A673 (cell line): ENCODE measurements at regions of chr10 and their contacts with region 1.

Region 1: DNA sequence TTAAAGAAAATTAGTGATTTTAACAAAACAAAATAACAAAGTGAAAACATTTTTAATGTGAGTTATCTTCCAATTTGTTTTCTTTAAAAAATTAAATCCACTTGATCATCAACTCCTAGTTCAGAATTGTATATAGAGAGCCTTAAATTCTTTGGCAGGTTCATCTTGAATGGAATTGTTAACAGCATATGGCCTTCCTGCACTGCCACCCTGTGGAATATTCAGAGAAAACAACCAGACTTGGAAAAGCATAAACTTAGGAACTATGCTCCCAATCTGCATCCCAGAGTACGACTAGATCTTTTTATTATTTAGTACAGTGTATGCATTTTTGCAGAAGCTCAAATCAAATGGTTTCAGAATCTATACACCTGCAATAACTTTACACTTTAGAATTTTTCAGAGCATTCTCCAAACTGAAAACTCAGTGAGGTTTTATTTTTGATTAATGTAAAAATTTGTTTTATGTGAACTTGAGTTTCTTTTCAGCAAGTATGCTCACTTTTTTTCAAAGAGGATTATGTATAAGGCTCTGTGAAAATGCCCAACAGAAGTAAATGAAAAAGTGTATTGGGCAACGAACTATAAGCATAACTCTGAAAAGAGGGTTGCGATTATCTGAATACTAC is 44.9 kb upstream of the ANK3 start:
- DNase-seq: peak; percentile 72
- H3K4me3 ChIP-seq: no peak overlapping the region
- H3K27ac ChIP-seq: no peak overlapping the region
- H3K4me1 ChIP-seq: no peaks in the 10 kb centered on the region
- H3K27me3 ChIP-seq: no peaks in the 10 kb centered on the region
- CTCF ChIP-seq: peak; percentile 78

Region 2: DNA sequence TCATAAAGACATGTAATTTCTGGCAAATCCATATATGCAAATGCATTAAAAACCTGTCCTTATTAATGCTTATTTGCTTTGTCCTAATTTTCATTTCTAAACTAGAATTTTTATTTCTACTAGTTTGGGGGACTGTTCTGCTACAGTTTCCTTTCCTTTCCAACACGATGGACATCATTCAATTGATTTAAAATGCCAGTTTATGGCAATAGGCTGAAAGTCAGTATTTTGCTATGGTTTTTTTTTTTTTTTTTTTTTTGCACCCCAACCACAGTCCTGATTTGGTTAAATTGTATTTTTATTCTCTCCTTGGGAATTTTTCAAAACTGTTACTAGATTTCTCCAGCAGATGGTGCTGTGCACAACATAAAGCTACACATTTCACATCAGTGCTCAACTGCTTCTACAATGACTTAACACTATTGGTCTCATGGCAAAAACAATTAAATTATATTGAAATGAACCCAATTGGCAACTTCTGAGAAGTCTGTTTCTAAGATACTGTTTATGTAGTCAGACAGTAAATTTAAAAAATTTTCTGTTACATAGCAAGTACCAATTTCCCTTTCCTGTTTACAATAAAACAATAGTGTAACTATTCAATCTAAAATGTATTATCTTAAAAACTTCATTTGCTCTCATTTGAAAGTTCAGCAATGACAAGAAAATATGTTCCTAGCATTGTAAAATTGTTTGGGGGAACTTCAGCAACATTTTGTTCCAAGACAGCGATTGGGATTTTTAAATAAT is 334.4 kb before region 1 on chr10:
- CTCF ChIA-PET with region 1: interaction called, 8 read pairs
- POLR2A ChIA-PET with region 1: no interaction called
- intact Hi-C with region 1: loop called (anchors 2 kb)
- DNase-seq: peak; percentile 78
- H3K4me3 ChIP-seq: no peak overlapping the region
- H3K27ac ChIP-seq: no peak overlapping the region
- H3K4me1 ChIP-seq: no peaks in the 10 kb centered on the region
- H3K27me3 ChIP-seq: no peaks in the 10 kb centered on the region
- CTCF ChIP-seq: peak; percentile 74

Region 3: GRCh38 chr10:60208676-60209269 is 225.8 kb before region 1 on chr10:
- CTCF ChIA-PET with region 1: interaction called, 3 read pairs
- POLR2A ChIA-PET with region 1: no interaction called
- intact Hi-C with region 1: loop called (anchors 1 kb)
- DNase-seq: peak; percentile 60
- H3K4me3 ChIP-seq: no peak overlapping the region
- H3K27ac ChIP-seq: no peak overlapping the region
- H3K4me1 ChIP-seq: no peaks in the 10 kb centered on the region
- H3K27me3 ChIP-seq: no peaks in the 10 kb centered on the region
- CTCF ChIP-seq: peak; percentile 80

Region 4: DNA sequence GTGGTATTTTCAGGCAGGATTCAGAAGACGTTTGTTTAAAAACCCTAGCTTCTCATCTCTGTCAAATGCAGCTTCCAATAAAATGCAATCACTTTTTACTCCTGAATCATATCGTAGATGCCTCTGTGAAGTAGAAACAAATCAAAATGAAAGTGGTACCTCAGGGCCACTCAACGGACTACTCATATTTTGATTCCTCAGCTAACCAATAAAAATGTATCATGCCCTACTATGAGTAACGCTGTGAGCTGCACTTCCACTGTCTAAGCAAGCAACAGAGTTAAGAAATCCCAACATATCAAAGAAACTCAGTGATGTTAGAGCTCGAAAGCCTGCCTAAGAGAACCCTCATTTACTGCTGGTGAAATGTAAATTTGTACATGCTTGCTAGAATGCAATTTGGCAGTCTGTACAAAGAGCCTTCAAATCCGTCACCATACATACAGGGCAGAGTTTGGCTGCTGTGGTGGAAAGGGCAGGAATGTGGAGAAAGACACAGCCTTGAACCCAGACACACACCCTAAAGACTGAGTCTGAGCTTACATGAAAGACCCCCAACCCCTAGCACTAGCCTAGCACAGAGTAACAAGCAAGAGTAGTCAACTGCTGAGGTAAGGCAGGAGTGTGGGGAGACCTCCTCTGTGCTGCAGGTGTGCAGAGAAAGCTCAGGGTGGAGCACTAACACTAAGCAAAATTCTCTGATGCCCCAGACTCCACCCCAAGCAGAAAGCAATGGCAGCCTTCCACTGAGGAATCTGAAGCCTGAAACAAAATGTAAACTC is 196.4 kb before region 1 on chr10:
- CTCF ChIA-PET with region 1: no interaction called
- POLR2A ChIA-PET with region 1: no interaction called
- intact Hi-C with region 1: loop called (anchors 10 kb)
- DNase-seq: peak; percentile 45
- H3K4me3 ChIP-seq: no peak overlapping the region
- H3K27ac ChIP-seq: no peak overlapping the region
- H3K4me1 ChIP-seq: peaks cover 7% of the 10 kb centered on the region
- H3K27me3 ChIP-seq: no peaks in the 10 kb centered on the region
- CTCF ChIP-seq: peak; percentile 52

Region 5: GRCh38 chr10:60335708-60336107 is 98.8 kb before region 1 on chr10:
- CTCF ChIA-PET with region 1: no interaction called
- POLR2A ChIA-PET with region 1: interaction called, 7 read pairs
- intact Hi-C with region 1: loop called (anchors 5 kb)
- DNase-seq: no peak
- H3K4me3 ChIP-seq: no peak overlapping the region
- H3K27ac ChIP-seq: no peak overlapping the region
- H3K4me1 ChIP-seq: peaks cover 7% of the 10 kb centered on the region
- H3K27me3 ChIP-seq: no peaks in the 10 kb centered on the region
- CTCF ChIP-seq: peak; percentile 47; the same call in 1 of the 2 replicates